Left cardiac atrium (tissue), 4 donors: ENCODE measurements at regions of chr6 and their contacts with region 1.

Region 1: DNA sequence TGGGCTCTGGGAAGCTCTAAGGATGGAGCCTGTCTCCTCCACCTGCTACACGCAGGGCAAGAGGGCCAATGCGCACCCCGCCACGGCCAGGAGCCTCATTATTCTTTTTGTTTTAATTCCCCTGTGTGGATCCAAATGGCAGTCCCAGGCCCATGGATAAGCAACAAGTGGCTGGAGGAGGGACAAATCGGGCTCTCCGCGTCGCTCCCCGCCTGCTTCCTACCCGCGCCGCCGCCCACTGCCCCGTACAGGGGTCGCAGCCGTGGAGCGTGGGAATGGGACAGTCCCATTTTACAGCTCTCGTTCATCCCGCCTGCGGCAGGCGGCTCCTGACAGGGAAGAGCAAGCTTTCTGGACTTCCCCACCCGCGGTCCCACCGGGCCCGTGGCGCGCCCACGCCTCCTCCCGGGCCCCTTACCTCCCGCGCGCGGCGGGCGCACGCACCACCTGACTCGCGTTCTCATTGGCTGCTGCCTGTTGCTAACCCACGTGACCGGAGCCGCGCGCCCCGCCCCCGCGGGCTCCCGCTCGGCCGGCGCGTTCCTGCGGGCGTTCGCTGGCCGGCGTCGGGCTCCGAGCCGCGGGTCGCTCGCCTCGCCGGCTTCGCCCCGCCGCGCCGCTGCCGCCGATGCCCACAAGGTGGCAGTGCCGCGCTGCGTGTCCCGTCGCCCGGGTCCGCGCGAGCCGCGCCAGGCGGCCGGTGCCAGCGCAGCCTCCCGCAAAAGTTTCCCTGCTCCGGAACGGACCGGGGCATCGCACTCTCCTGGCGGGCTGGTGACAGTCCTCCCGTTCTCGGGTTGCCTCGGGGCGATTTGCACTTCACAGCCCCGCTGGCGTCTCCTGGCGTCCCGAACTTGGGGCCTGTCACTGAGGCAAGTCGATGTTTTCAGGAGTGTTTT is 93.3 kb downstream of the CD83 start:
- DNase-seq: peak; percentile 95
- ATAC-seq: peak; percentile 97

Region 2: DNA sequence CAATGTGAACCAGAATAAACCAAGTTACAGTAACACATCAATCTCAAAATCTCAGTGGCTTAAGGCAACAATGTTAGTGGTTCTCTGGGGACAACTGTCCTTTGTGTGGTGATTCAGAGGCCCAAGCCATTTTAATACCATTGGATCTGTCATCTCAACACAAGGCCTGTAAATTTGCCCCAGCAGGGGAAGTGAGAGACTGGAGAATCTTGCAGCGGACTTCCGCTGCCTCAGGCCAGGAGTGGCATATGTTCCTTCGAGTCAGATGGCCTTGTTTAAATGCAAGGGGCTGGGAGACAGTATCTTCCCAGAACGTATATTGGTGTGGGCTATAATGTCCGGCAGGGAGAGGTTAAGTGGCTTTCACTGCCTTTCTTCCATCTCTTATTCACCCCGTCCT is 32.7 kb after region 1 on chr6:
- intact Hi-C with region 1: no loop called
- DNase-seq: no peak
- ATAC-seq: no peak

Region 3: GRCh38 chr6:14254505-14254904 is 43.6 kb after region 1 on chr6:
- intact Hi-C with region 1: no loop called
- DNase-seq: no peak
- ATAC-seq: no peak

Region 4: DNA sequence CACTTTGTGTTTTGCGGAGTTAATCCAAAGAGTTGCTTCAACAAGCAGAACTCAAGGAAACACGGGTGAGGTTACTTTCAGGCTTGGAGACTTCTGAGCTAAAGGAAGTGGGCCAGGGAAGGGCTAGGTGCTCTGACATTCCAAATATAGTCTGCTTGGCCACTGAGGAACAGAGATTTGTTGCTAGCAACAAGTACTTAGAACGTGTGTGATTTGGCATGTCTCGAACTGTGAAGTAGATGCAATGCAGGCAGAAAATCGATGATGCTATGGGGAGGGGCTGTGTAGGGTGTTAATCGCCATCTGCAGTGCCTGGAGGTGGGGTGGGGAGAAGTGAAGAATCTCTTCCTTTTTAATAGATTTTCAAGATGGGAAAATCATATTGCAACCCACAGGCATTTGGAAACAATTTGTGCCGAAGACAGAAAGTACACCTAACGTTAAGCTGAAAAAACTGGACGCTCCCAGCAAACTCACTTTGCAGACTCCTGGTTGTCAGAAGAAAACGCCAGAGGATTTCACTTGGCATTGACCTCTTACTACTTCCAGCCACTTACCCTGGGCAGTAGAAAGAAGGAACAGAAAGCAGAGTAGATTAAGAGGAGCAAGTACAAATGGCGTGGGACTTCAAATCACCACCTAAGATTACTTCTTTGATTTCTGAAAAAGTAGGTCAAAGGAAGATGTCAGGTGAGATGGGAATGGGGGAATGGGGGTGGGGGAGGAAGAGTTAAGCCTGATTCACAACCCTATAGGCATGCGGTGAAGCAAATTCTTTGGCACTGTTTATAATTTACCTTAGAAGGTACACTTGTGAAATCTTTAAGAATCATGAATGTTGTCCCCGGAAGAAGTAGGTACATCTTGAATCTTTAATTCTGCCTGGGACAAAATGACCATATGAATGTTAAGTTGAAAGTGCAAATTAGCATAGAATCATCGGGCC is 220.7 kb after region 1 on chr6:
- intact Hi-C with region 1: loop called in 1 of 2 experiments (anchors 10 kb)
- DNase-seq: no peak
- ATAC-seq: peak; percentile 79 to 90

Region 5: DNA sequence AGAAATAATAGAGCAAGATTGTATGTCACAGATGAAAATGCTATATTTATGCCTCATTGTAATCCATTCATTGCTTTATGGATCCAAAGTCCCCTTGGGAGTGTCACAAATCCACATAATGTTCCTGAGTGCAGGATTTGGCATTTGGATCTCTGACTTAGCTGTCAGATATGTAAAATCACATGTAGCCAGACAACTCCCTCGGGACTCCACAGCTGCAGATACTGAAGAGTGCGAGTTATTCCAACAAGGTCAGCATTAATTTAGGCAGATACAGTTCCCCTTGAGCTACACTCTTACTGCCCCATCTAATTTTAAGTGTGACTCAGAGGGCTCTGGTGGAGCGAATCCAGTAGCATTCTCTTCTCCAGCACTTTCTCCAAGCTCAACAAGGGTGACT is 339.9 kb after region 1 on chr6:
- intact Hi-C with region 1: loop called in 1 of 2 experiments (anchors 10 kb)
- DNase-seq: peak; percentile 31
- ATAC-seq: peak; percentile 89 to 97

Region 6: GRCh38 chr6:14711056-14711703 is 500.3 kb after region 1 on chr6:
- intact Hi-C with region 1: loop called in 1 of 2 experiments (anchors 10 kb)
- DNase-seq: no peak
- ATAC-seq: peak; percentile 37 to 42

Region 7: GRCh38 chr6:15239616-15240364 is 1028.9 kb after region 1 on chr6:
- intact Hi-C with region 1: loop called in 1 of 2 experiments (anchors 10 kb)
- DNase-seq: no peak
- ATAC-seq: peak in 1 of 2 donors; percentile 32